OCI-LY7 (cell line): ENCODE measurements at regions of chr17 and their contacts with region 1.

Region 1: GRCh38 chr17:73429440-73430164 is 117.8 kb upstream of the CDC42EP4 start:
- DNase-seq: peak; percentile 88
- H3K4me3 ChIP-seq: no peak overlapping the region
- H3K27ac ChIP-seq: no peak overlapping the region
- H3K4me1 ChIP-seq: no peaks in the 10 kb centered on the region
- CTCF ChIP-seq: peak; percentile 100

Region 2: GRCh38 chr17:73585583-73585982 is 156.0 kb after region 1 on chr17:
- CTCF ChIA-PET with region 1: interaction called, 10 read pairs
- POLR2A ChIA-PET with region 1: no interaction called
- intact Hi-C with region 1: loop called (anchors 1 kb)
- DNase-seq: peak; percentile 78
- H3K4me3 ChIP-seq: no peak overlapping the region
- H3K27ac ChIP-seq: no peak overlapping the region
- H3K4me1 ChIP-seq: peaks cover 63% of the 10 kb centered on the region
- CTCF ChIP-seq: peak; percentile 83

Region 3: GRCh38 chr17:73710095-73710592 is 280.5 kb after region 1 on chr17:
- CTCF ChIA-PET with region 1: interaction called, 3 read pairs
- POLR2A ChIA-PET with region 1: interaction called, 3 read pairs
- intact Hi-C with region 1: loop called (anchors 1 kb)
- DNase-seq: peak; percentile 60
- H3K4me3 ChIP-seq: peak overlapping the region; percentile 59
- H3K27ac ChIP-seq: peak overlapping the region; percentile 76
- H3K4me1 ChIP-seq: peaks cover 29% of the 10 kb centered on the region
- CTCF ChIP-seq: peak; percentile 95

Region 4: GRCh38 chr17:73841431-73842060 is 411.9 kb after region 1 on chr17:
- CTCF ChIA-PET with region 1: no interaction called
- POLR2A ChIA-PET with region 1: no interaction called
- intact Hi-C with region 1: loop called (anchors 1 kb)
- DNase-seq: peak; percentile 58
- H3K4me3 ChIP-seq: no peak overlapping the region
- H3K27ac ChIP-seq: no peak overlapping the region
- H3K4me1 ChIP-seq: no peaks in the 10 kb centered on the region
- CTCF ChIP-seq: peak; percentile 85

Region 5: GRCh38 chr17:73998653-73999645 is 569.3 kb after region 1 on chr17:
- CTCF ChIA-PET with region 1: no interaction called
- POLR2A ChIA-PET with region 1: no interaction called
- intact Hi-C with region 1: loop called (anchors 1 kb)
- DNase-seq: peak; percentile 65
- H3K4me3 ChIP-seq: no peak overlapping the region
- H3K27ac ChIP-seq: no peak overlapping the region
- H3K4me1 ChIP-seq: no peaks in the 10 kb centered on the region
- CTCF ChIP-seq: peak; percentile 93